Activated T-helper 2 cell treated with anti-CD3 and anti-CD28 coated beads, Interferon-gamma antibody, Interleukin-2, Interleukin-4, amounts not matched to agents 10 μg/mL and 5 μg/mL and 100 μg/mL, durations not matched to agents 14 hours and 24 hours and 36 hours (primary cell): ENCODE measurements at regions of chr11 and their contacts with region 1.

Region 1: GRCh38 chr11:36354221-36355003 is 58.3 kb downstream of the PRR5L start:
- DNase-seq: no peak
- H3K4me3 Mint-ChIP-seq: peak overlapping the region; percentile 1
- H3K27ac Mint-ChIP-seq: peak overlapping the region; percentile 15
- H3K4me1 Mint-ChIP-seq: peaks cover 65% of the 10 kb centered on the region
- H3K27me3 Mint-ChIP-seq: peaks cover 3% of the 10 kb centered on the region

Region 2: GRCh38 chr11:36289226-36289852 is 65.1 kb before region 1 on chr11 and contains the start of gene COMMD9:
- intact Hi-C with region 1: loop called (anchors 2 kb)
- DNase-seq: peak; percentile 92
- H3K4me3 Mint-ChIP-seq: peak within 1 kb of the TSS; percentile 88
- H3K27ac Mint-ChIP-seq: peak within 1 kb of the TSS; percentile 75
- H3K4me1 Mint-ChIP-seq: peaks cover 22% of the 10 kb centered on the region
- H3K27me3 Mint-ChIP-seq: no peaks in the 10 kb centered on the region
- total RNA-seq, gene COMMD9: 35.8 and 39.8 TPM in 2 replicates

Region 3: GRCh38 chr11:36364551-36365325 is 10.3 kb after region 1 on chr11:
- intact Hi-C with region 1: no loop called
- DNase-seq: no peak
- H3K4me3 Mint-ChIP-seq: no peak overlapping the region
- H3K27ac Mint-ChIP-seq: no peak overlapping the region
- H3K4me1 Mint-ChIP-seq: peaks cover 36% of the 10 kb centered on the region
- H3K27me3 Mint-ChIP-seq: peaks cover 51% of the 10 kb centered on the region

Region 4: GRCh38 chr11:36376888-36377758 is 22.7 kb after region 1 on chr11:
- intact Hi-C with region 1: loop called (anchors 1 kb)
- DNase-seq: peak; percentile 49
- H3K4me3 Mint-ChIP-seq: peak overlapping the region; percentile 89
- H3K27ac Mint-ChIP-seq: peak overlapping the region; percentile 81
- H3K4me1 Mint-ChIP-seq: peaks cover 28% of the 10 kb centered on the region
- H3K27me3 Mint-ChIP-seq: peaks cover 65% of the 10 kb centered on the region

Region 5: DNA sequence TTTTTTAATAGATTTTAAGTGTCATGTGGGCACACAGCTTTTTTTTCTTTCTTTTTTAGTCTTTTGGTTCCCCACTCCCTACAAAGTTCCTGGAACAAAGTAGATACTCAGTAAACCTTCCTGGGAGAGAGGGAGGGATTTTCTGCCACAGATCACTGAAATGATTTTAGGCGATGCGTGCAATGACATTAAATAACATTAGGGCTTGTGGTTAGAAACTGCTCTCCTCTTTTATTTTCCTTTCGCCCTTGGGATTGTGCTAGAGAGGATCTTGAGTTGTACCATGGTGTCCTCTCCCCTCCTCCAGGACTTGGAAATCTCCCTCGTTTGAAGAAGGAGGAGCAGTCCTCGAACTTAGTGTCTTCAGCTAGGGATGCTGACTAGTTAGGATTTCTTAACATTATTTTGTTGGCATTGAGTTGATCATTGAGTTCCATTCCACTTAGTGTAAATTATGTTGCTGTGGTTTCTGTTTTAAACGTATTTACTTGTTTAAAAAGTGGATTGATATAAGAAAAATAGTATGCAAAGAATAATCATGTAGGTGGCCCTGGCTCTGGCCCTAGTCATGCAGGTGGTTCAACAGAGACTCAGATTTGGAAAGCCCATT is 67.2 kb after region 1 on chr11:
- intact Hi-C with region 1: loop called (anchors 1 kb)
- DNase-seq: no peak
- H3K4me3 Mint-ChIP-seq: peak overlapping the region; percentile 10
- H3K27ac Mint-ChIP-seq: peak overlapping the region; percentile 70
- H3K4me1 Mint-ChIP-seq: peaks cover 56% of the 10 kb centered on the region
- H3K27me3 Mint-ChIP-seq: peaks cover 8% of the 10 kb centered on the region

Region 6: DNA sequence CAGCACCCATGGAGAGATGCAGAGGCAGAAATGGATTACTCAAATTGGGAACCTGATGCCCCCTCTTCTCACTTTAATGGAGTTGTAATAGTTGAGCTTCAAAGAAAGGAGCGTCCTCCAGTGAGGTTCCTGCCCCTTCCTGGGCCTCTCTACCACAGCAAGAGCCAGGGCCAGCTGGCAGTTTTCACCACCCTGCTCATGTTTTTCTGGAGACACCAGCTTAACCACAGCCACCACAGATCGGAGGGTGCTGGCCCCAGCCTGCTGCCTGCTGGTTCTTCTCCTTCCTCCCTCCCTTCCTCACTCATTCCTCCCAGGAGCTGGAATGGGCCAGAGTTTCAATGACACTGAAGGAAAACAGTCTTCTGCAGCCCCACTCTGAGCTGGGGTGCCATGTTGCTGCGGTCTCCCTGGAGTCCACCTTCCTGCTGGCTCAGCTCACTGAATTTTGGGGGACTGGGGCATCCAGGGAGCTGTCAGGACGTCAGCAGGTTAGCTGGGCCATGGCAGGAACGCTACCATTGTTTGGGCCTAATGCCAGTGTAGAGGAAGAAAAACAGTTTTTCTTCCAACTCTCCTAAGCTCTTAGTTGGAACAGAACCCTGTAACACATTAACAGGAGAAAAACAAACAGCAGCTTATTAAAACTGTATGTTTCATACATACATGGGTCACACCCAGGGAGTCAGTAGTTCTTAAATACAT is 98.0 kb after region 1 on chr11:
- intact Hi-C with region 1: loop called (anchors 1 kb)
- DNase-seq: no peak
- H3K4me3 Mint-ChIP-seq: peak overlapping the region; percentile 53
- H3K27ac Mint-ChIP-seq: peak overlapping the region; percentile 70
- H3K4me1 Mint-ChIP-seq: peaks cover 55% of the 10 kb centered on the region
- H3K27me3 Mint-ChIP-seq: peaks cover 6% of the 10 kb centered on the region

Region 7: DNA sequence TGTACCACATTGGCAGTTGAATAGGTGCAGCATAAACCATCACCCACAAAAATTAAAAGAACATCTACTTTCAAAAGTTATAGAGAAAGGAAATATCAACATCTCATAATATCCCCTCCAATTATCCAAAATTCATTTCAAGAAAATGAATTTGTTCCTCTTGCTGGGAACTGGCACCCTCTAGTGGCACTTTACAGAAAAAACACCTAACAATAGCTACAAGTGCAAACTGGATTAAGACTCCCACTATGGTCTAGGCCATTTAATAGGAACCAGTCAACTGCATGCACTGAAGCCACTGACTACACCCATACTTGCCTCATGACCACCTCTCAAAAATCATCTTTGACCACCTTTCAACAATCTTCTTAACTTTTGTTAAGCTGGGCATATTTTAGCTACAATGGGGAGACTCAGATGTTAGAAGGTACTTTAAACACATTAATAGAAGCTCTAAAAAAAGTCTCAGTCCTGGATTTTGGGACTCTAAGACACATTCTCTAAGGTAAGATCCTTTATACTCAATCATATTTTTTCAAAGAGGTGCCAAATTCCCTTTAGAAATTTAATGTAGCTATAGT is 138.4 kb after region 1 on chr11:
- intact Hi-C with region 1: loop called (anchors 1 kb)
- DNase-seq: no peak
- H3K4me3 Mint-ChIP-seq: no peak overlapping the region
- H3K27ac Mint-ChIP-seq: no peak overlapping the region
- H3K4me1 Mint-ChIP-seq: peaks cover 16% of the 10 kb centered on the region
- H3K27me3 Mint-ChIP-seq: no peaks in the 10 kb centered on the region